ENCODE measurements at regions of chr22 and their contacts with region 1.

Region 1: GRCh38 chr22:36194971-36195370 is 6.6 kb downstream of the APOL4 start:
- DNase-seq: peak; percentile 56
- H3K4me3 Mint-ChIP-seq: no peak overlapping the region
- H3K27ac Mint-ChIP-seq: no peak overlapping the region
- H3K4me1 Mint-ChIP-seq: peaks cover 47% of the 10 kb centered on the region
- H3K27me3 Mint-ChIP-seq: peaks cover 1% of the 10 kb centered on the region

Region 2: DNA sequence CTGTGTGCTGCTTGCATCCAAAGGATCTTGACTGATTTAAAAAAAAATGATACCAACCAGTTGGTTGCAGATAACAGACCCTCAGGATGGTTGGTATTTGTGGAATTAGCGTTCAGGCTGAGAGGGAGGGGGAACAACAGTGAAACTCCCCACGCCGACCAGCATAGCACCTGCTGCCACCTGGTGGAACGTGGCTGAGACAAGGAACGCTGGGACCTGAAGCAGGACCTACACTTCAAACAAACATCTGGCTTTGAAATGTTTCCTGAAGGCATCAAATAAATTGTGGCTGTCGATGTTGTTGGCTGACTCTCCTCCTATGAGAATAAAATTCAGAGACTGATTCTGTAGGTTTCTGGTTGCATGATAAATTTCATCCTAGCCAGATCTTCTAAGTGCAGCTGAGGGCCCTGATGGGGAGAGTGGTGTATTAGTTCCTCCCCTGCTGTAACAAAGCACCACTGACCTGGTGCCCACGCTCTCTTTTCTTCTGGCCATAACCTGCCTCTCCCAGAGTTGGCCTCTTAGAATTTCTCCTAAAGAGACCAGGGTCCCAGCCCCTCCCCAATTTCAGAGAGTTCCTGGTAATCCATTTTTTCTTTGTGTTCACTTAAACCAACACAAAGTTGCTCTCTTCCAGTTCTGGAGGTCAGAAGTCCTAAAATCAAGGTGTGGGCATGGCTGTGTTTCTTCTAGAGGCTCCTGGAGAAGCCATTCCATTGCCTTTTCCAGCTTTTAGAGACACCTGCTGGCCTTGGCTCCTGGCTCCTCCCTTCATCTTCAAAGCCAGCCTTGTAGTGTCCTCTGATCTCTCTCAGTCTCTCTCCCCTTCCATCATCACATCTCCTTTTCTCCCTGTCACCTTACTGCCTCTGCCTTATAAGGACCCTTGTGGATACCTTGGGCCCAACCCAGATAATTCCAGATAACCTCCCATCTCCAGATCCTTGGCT is 27.1 kb after region 1 on chr22:
- CTCF ChIA-PET with region 1: interaction called, 15 read pairs
- POLR2A ChIA-PET with region 1: no interaction called
- DNase-seq: peak; percentile 58
- H3K4me3 Mint-ChIP-seq: no peak overlapping the region
- H3K27ac Mint-ChIP-seq: no peak overlapping the region
- H3K4me1 Mint-ChIP-seq: peaks cover 11% of the 10 kb centered on the region
- H3K27me3 Mint-ChIP-seq: peaks cover 30% of the 10 kb centered on the region

Region 3: DNA sequence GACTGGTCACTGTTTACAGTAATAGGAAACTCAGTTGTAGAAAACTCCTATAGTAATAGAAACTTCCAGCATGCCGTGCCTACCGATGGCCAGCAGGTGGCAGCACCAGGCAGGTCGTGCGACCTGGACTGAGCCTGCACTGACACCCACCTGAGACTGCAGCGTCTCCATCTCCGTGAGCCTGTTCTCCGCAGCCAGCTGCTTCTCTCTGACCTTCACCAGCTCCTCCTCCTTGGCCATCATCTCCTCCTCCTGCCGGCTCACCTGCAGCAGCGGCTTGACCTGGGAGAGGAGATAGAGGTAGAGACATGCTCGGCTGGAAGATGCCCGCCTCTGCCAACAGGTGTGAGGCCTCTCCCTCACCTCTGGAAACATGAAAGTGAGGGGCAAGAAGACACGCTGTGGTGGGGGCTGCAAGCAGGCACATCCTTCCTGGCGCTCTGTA is 106.4 kb after region 1 on chr22:
- CTCF ChIA-PET with region 1: no interaction called
- POLR2A ChIA-PET with region 1: no interaction called
- DNase-seq: peak; percentile 84
- H3K4me3 Mint-ChIP-seq: no peak overlapping the region
- H3K27ac Mint-ChIP-seq: peak overlapping the region; percentile 54
- H3K4me1 Mint-ChIP-seq: peaks cover 16% of the 10 kb centered on the region
- H3K27me3 Mint-ChIP-seq: no peaks in the 10 kb centered on the region

Region 4: DNA sequence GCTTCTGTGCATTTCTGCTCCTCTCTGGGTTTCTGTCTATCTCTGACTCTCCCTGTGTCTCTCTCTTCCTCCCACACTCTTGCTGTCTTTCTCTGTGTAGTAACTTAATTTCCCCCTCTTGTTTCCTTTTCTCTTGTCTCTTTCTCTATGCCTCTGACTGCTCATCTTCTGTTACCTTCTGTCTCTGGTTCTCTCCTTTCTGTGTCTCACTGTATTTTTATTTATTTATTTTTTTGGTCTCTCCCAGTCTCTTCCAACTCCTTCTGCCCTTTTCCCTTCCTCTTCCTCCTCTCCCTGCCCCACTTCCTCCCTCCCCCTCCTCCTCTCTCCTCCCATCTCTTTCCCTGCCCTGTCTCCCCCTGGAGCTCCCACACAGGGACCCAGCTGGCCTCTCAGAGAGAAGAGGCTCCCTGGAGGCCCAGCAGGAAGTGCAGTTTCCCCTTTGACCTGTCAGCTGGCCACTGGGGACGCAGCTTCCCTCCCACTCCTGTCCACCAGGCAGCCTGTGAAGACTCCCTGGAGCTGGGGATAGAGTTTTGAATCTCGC is 231.1 kb after region 1 on chr22:
- CTCF ChIA-PET with region 1: no interaction called
- POLR2A ChIA-PET with region 1: no interaction called
- DNase-seq: no peak
- H3K4me3 Mint-ChIP-seq: no peak overlapping the region
- H3K27ac Mint-ChIP-seq: no peak overlapping the region
- H3K4me1 Mint-ChIP-seq: peaks cover 25% of the 10 kb centered on the region
- H3K27me3 Mint-ChIP-seq: no peaks in the 10 kb centered on the region

Measured in activated CD4-positive, alpha-beta memory T cell treated with anti-CD3 and anti-CD28 coated beads, Interleukin-2, amount 10 ng/mL, durations not matched to agents 7 days and 5 days (primary cell).